B cell (primary cell): ENCODE measurements at regions of chr5 and their contacts with region 1.

Region 1: GRCh38 chr5:82225525-82226172 is 52.5 kb downstream of the RPS23 start:
- DNase-seq: peak; percentile 77
- ATAC-seq: peak; percentile 73
- H3K4me3 ChIP-seq: no peak overlapping the region
- H3K4me3 Mint-ChIP-seq: no peak overlapping the region
- H3K27ac ChIP-seq: no peak overlapping the region
- H3K27ac Mint-ChIP-seq: no peak overlapping the region
- H3K4me1 ChIP-seq: peaks cover 2 to 4% of the 10 kb centered on the region in 2 donors
- H3K4me1 Mint-ChIP-seq: peaks cover 4% of the 10 kb centered on the region
- H3K27me3 ChIP-seq: no peaks in the 10 kb centered on the region
- H3K27me3 Mint-ChIP-seq: no peaks in the 10 kb centered on the region
- CTCF ChIP-seq: peak; percentile 96

Region 2: GRCh38 chr5:81425569-81425968 is 800.1 kb before region 1 on chr5:
- CTCF ChIA-PET with region 1: interaction called, 83 read pairs
- POLR2A ChIA-PET with region 1: no interaction called
- intact Hi-C with region 1: loop called (anchors 1 kb)
- DNase-seq: peak; percentile 54
- ATAC-seq: no peak
- H3K4me3 ChIP-seq: no peak overlapping the region
- H3K4me3 Mint-ChIP-seq: no peak overlapping the region
- H3K27ac ChIP-seq: no peak overlapping the region
- H3K27ac Mint-ChIP-seq: peak overlapping the region; percentile 70
- H3K4me1 ChIP-seq: no peaks in the 10 kb centered on the region
- H3K4me1 Mint-ChIP-seq: peaks cover 4% of the 10 kb centered on the region
- H3K27me3 ChIP-seq: no peaks in the 10 kb centered on the region
- H3K27me3 Mint-ChIP-seq: no peaks in the 10 kb centered on the region
- CTCF ChIP-seq: peak; percentile 85

Region 3: GRCh38 chr5:82107267-82107666 is 118.4 kb before region 1 on chr5:
- CTCF ChIA-PET with region 1: interaction called, 6 read pairs
- POLR2A ChIA-PET with region 1: no interaction called
- intact Hi-C with region 1: loop called (anchors 1 kb)
- DNase-seq: no peak
- ATAC-seq: no peak
- H3K4me3 ChIP-seq: no peak overlapping the region
- H3K4me3 Mint-ChIP-seq: no peak overlapping the region
- H3K27ac ChIP-seq: no peak overlapping the region
- H3K27ac Mint-ChIP-seq: no peak overlapping the region
- H3K4me1 ChIP-seq: no peaks in the 10 kb centered on the region
- H3K4me1 Mint-ChIP-seq: no peaks in the 10 kb centered on the region
- H3K27me3 ChIP-seq: no peaks in the 10 kb centered on the region
- H3K27me3 Mint-ChIP-seq: no peaks in the 10 kb centered on the region
- CTCF ChIP-seq: no peak

Region 4: DNA sequence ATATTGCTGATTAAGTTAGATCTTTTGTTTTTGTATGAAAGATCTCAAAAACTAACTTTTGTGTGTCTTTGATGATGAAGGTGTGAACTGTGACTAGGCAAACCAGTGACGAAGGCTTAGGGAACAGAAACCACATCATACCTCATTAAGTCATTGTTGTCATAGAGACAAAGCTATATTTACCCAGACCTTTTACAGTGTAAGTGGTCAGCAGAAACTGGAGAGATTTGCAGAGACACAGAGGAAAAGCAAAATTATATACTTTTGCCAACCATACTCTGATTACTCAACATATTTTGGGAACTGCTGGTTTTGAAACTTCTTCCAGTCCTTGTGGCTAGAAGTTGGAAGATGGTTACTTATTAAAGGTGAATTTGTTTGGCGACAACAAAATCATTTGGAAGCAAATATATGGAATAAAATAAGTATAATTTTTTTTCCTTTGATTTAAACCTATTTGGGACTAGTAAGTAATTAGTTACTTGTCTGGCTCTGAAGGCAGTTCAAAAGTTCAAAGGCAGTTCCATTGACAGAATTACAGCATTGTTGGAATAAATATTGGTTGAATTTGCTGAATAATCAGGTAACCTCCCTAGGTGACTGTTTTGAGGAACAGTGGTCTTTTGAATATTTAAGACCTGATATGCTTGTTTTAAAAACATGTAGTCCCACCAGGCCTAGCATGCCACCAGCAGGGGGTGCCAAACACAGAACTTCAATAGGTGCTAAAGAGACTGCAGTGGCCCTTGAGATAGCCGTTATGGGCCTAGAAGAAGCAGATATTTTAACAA is 51.3 kb before region 1 on chr5:
- CTCF ChIA-PET with region 1: no interaction called
- POLR2A ChIA-PET with region 1: no interaction called
- intact Hi-C with region 1: loop called (anchors 1 kb)
- DNase-seq: peak; percentile 74
- ATAC-seq: peak; percentile 88
- H3K4me3 ChIP-seq: no peak overlapping the region
- H3K4me3 Mint-ChIP-seq: peak overlapping the region; percentile 31
- H3K27ac ChIP-seq: peak overlapping the region in 1 of 2 donors; percentile 32
- H3K27ac Mint-ChIP-seq: peak overlapping the region; percentile 60
- H3K4me1 ChIP-seq: peaks cover 9% of the 10 kb centered on the region in 2 donors
- H3K4me1 Mint-ChIP-seq: peaks cover 18% of the 10 kb centered on the region
- H3K27me3 ChIP-seq: no peaks in the 10 kb centered on the region
- H3K27me3 Mint-ChIP-seq: no peaks in the 10 kb centered on the region
- CTCF ChIP-seq: peak; percentile 71

Region 5: GRCh38 chr5:82334856-82335255 is 109.2 kb after region 1 on chr5:
- CTCF ChIA-PET with region 1: no interaction called
- POLR2A ChIA-PET with region 1: no interaction called
- intact Hi-C with region 1: no loop called
- DNase-seq: no peak
- ATAC-seq: no peak
- H3K4me3 ChIP-seq: no peak overlapping the region
- H3K4me3 Mint-ChIP-seq: no peak overlapping the region
- H3K27ac ChIP-seq: no peak overlapping the region
- H3K27ac Mint-ChIP-seq: no peak overlapping the region
- H3K4me1 ChIP-seq: no peaks in the 10 kb centered on the region
- H3K4me1 Mint-ChIP-seq: no peaks in the 10 kb centered on the region
- H3K27me3 ChIP-seq: no peaks in the 10 kb centered on the region
- H3K27me3 Mint-ChIP-seq: peaks cover 6% of the 10 kb centered on the region
- CTCF ChIP-seq: no peak

Region 6: GRCh38 chr5:83509540-83509939 is 1283.9 kb after region 1 on chr5:
- CTCF ChIA-PET with region 1: no interaction called
- POLR2A ChIA-PET with region 1: no interaction called
- intact Hi-C with region 1: no loop called
- DNase-seq: no peak
- ATAC-seq: no peak
- H3K4me3 ChIP-seq: no peak overlapping the region
- H3K4me3 Mint-ChIP-seq: no peak overlapping the region
- H3K27ac ChIP-seq: no peak overlapping the region
- H3K27ac Mint-ChIP-seq: no peak overlapping the region
- H3K4me1 ChIP-seq: no peaks in the 10 kb centered on the region
- H3K4me1 Mint-ChIP-seq: no peaks in the 10 kb centered on the region
- H3K27me3 ChIP-seq: no peaks in the 10 kb centered on the region
- H3K27me3 Mint-ChIP-seq: no peaks in the 10 kb centered on the region
- CTCF ChIP-seq: no peak